ENCODE measurements at regions of chr7 and their contacts with region 1.

Region 1: DNA sequence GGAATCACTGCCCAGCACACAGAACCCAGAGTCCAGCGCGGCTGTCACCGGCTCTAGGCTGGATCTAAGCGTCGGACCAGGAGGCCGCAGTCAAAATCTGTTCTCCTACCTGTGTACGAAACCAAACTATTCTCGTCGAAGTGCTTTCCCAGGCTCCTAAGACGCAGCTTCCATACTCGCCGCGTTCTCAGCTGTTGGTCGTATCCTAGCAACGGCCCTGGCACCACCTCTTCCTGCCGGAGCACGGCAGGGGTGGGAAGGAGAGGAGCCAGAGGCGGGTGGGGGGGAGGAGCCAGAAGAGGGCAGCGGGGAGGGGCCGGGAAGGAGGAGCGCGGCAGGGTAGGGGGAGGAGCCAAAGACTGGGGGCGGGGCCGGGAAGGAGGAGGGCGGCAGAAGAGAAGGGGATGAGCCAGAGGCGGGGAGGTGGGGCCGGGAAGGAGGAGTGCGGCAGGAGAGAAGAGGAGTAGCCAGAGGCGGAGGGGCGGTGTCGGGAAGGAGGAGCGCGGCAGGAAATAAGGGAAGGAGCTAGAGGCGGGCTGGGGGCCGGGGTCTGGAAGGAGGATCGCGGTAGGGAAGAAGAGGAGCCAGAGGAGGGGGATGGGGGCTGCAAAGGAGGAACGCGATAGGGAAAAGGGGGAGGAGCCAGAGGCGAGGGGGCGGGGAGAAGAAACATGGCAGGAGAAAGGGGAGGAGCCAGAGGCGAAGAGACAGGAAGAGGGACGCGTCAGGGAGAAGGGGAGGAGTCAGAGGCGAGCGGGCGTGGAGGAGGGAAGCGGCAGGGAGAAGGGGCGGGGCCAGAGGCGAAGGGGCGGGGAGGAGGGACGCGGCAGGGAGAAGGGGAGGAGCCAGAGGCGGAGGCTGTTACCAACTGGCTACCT is at the start of gene IQUB:
- DNase-seq: peak; percentile 88 to 97 (median 95)
- ATAC-seq: peak; percentile 89
- H3K4me3 ChIP-seq: peak within 1 kb of the TSS; percentile 61 to 77
- H3K4me3 Mint-ChIP-seq: peak within 1 kb of the TSS; percentile 84
- H3K27ac ChIP-seq: peak within 1 kb of the TSS; percentile 39 to 76
- H3K27ac Mint-ChIP-seq: peak within 1 kb of the TSS; percentile 52
- H3K4me1 ChIP-seq: peaks cover 6% of the 10 kb centered on the region
- H3K4me1 Mint-ChIP-seq: peaks cover 28% of the 10 kb centered on the region
- H3K27me3 ChIP-seq: peaks cover 3 to 6% of the 10 kb centered on the region in 2 experiments
- H3K27me3 Mint-ChIP-seq: peaks cover 19% of the 10 kb centered on the region
- CTCF ChIP-seq: no peak
- total RNA-seq, gene IQUB: not detected

Region 2: GRCh38 chr7:123480107-123480506 is 54.5 kb before region 1 on chr7:
- CTCF ChIA-PET with region 1: no interaction called
- POLR2A ChIA-PET with region 1: no interaction called
- intact Hi-C with region 1: no loop called
- DNase-seq: no peak
- ATAC-seq: no peak
- H3K4me3 ChIP-seq: no peak overlapping the region
- H3K4me3 Mint-ChIP-seq: no peak overlapping the region
- H3K27ac ChIP-seq: no peak overlapping the region
- H3K27ac Mint-ChIP-seq: no peak overlapping the region
- H3K4me1 ChIP-seq: no peaks in the 10 kb centered on the region
- H3K4me1 Mint-ChIP-seq: no peaks in the 10 kb centered on the region
- H3K27me3 ChIP-seq: no peaks in the 10 kb centered on the region
- H3K27me3 Mint-ChIP-seq: peaks cover 28% of the 10 kb centered on the region
- CTCF ChIP-seq: no peak

Region 3: GRCh38 chr7:123494193-123494796 is 40.3 kb before region 1 on chr7:
- CTCF ChIA-PET with region 1: interaction called, 7 read pairs
- POLR2A ChIA-PET with region 1: interaction called, 4 read pairs
- intact Hi-C with region 1: loop called (anchors 1 kb)
- DNase-seq: peak in 5 of 9 experiments; percentile 23 to 63 (median 35)
- ATAC-seq: no peak
- H3K4me3 ChIP-seq: no peak overlapping the region
- H3K4me3 Mint-ChIP-seq: no peak overlapping the region
- H3K27ac ChIP-seq: no peak overlapping the region
- H3K27ac Mint-ChIP-seq: no peak overlapping the region
- H3K4me1 ChIP-seq: no peaks in the 10 kb centered on the region
- H3K4me1 Mint-ChIP-seq: no peaks in the 10 kb centered on the region
- H3K27me3 ChIP-seq: peaks cover 0 to 2% of the 10 kb centered on the region in 2 experiments
- H3K27me3 Mint-ChIP-seq: peaks cover 11% of the 10 kb centered on the region
- CTCF ChIP-seq: peak; percentile 93

Region 4: GRCh38 chr7:123557398-123558288 is 23.0 kb after region 1 on chr7 and contains the start of gene NDUFA5:
- CTCF ChIA-PET with region 1: interaction called, 3 read pairs
- POLR2A ChIA-PET with region 1: interaction called, 17 read pairs
- intact Hi-C with region 1: loop called (anchors 1 kb)
- DNase-seq: peak; percentile 93 to 100 (median 96)
- ATAC-seq: peak; percentile 96
- H3K4me3 ChIP-seq: peak within 1 kb of the TSS; percentile 80 to 90
- H3K4me3 Mint-ChIP-seq: no peak within 1 kb of the TSS
- H3K27ac ChIP-seq: peak within 1 kb of the TSS; percentile 84 to 85
- H3K27ac Mint-ChIP-seq: no peak within 1 kb of the TSS
- H3K4me1 ChIP-seq: peaks cover 26% of the 10 kb centered on the region
- H3K4me1 Mint-ChIP-seq: peaks cover 16% of the 10 kb centered on the region
- H3K27me3 ChIP-seq: no peaks in the 10 kb centered on the region
- H3K27me3 Mint-ChIP-seq: peaks cover 2% of the 10 kb centered on the region
- CTCF ChIP-seq: no peak
- total RNA-seq, gene NDUFA5: 62.4 to 70.6 TPM

Region 5: GRCh38 chr7:123570401-123571182 is 36.0 kb after region 1 on chr7:
- CTCF ChIA-PET with region 1: no interaction called
- POLR2A ChIA-PET with region 1: interaction called, 3 read pairs
- intact Hi-C with region 1: loop called in 1 of 2 experiments (anchors 5 kb)
- DNase-seq: no peak
- ATAC-seq: no peak
- H3K4me3 ChIP-seq: no peak overlapping the region
- H3K4me3 Mint-ChIP-seq: no peak overlapping the region
- H3K27ac ChIP-seq: no peak overlapping the region
- H3K27ac Mint-ChIP-seq: no peak overlapping the region
- H3K4me1 ChIP-seq: no peaks in the 10 kb centered on the region
- H3K4me1 Mint-ChIP-seq: no peaks in the 10 kb centered on the region
- H3K27me3 ChIP-seq: no peaks in the 10 kb centered on the region
- H3K27me3 Mint-ChIP-seq: no peaks in the 10 kb centered on the region
- CTCF ChIP-seq: no peak

Region 6: GRCh38 chr7:123583821-123584220 is 49.2 kb after region 1 on chr7:
- CTCF ChIA-PET with region 1: no interaction called
- POLR2A ChIA-PET with region 1: no interaction called
- intact Hi-C with region 1: no loop called
- DNase-seq: no peak
- ATAC-seq: no peak
- H3K4me3 ChIP-seq: no peak overlapping the region
- H3K4me3 Mint-ChIP-seq: no peak overlapping the region
- H3K27ac ChIP-seq: no peak overlapping the region
- H3K27ac Mint-ChIP-seq: no peak overlapping the region
- H3K4me1 ChIP-seq: no peaks in the 10 kb centered on the region
- H3K4me1 Mint-ChIP-seq: no peaks in the 10 kb centered on the region
- H3K27me3 ChIP-seq: peaks cover 4 to 7% of the 10 kb centered on the region in 2 experiments
- H3K27me3 Mint-ChIP-seq: peaks cover 21% of the 10 kb centered on the region
- CTCF ChIP-seq: no peak

Region 7: DNA sequence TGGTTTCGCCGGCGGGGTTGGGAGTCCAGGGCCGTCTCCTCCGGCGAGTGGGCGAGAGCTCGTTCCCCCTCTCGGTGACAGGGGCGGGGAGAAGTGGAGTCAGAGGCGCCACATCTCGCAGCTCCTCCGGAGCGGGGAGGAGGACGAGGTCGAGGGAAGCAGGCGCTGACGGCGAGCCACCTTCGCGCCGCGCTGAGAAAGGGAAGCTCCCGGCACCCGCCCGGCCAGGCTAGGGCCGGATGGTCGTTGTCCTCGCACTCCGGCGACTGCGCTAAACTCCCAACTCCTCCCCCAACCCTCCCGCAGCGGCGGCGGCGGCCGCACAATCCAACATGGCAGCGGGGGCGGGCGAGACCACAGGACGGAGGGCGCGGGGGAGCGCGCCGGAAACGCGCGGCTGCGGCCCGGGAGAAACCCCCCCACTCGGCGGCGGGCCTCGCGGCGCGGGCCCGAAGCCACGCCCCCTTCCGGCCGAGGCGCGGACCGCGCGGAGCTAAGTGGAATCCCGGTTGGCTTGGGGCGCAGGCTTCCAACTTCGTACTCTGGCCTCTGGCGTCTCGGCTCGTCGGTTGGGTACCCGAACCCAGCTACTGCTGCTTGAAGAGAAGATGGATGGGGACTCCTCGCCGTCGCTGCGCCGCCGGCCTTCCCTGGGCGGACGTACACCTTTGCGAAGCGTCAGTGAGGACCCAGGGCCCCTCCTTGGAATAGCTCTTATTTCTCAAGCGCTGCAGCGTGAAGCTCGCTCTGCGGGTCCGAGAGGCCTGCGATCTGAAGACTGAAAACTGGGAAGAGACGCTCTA is 214.3 kb after region 1 on chr7 and contains the start of gene WASL:
- CTCF ChIA-PET with region 1: no interaction called
- POLR2A ChIA-PET with region 1: interaction called, 10 read pairs
- intact Hi-C with region 1: loop called (anchors 1 to 5 kb)
- DNase-seq: peak; percentile 70 to 94 (median 87)
- ATAC-seq: peak; percentile 77
- H3K4me3 ChIP-seq: peak within 1 kb of the TSS; percentile 78 to 94
- H3K4me3 Mint-ChIP-seq: peak within 1 kb of the TSS; percentile 91
- H3K27ac ChIP-seq: peak within 1 kb of the TSS; percentile 79 to 88
- H3K27ac Mint-ChIP-seq: peak within 1 kb of the TSS; percentile 95
- H3K4me1 ChIP-seq: peaks cover 44% of the 10 kb centered on the region
- H3K4me1 Mint-ChIP-seq: peaks cover 63% of the 10 kb centered on the region
- H3K27me3 ChIP-seq: no peaks in the 10 kb centered on the region
- H3K27me3 Mint-ChIP-seq: no peaks in the 10 kb centered on the region
- CTCF ChIP-seq: no peak
- total RNA-seq, gene WASL: 9.4 to 9.9 TPM

Region 8: GRCh38 chr7:124929467-124930172 is 1395.0 kb after region 1 on chr7 and contains the start of gene POT1:
- CTCF ChIA-PET with region 1: no interaction called
- POLR2A ChIA-PET with region 1: no interaction called
- intact Hi-C with region 1: loop called in 1 of 2 experiments (anchors 2 kb)
- DNase-seq: peak; percentile 93 to 100 (median 96)
- ATAC-seq: peak; percentile 96
- H3K4me3 ChIP-seq: peak within 1 kb of the TSS; percentile 56 to 85
- H3K4me3 Mint-ChIP-seq: peak within 1 kb of the TSS; percentile 93
- H3K27ac ChIP-seq: peak within 1 kb of the TSS; percentile 60 to 92
- H3K27ac Mint-ChIP-seq: peak within 1 kb of the TSS; percentile 93
- H3K4me1 ChIP-seq: peaks cover 13% of the 10 kb centered on the region
- H3K4me1 Mint-ChIP-seq: peaks cover 52% of the 10 kb centered on the region
- H3K27me3 ChIP-seq: no peaks in the 10 kb centered on the region
- H3K27me3 Mint-ChIP-seq: no peaks in the 10 kb centered on the region
- CTCF ChIP-seq: no peak
- total RNA-seq, gene POT1: 8.4 to 16.7 TPM

Measured in CD8-positive, alpha-beta T cell (primary cell).